ENCODE measurements at regions of chr2 and their contacts with region 1.

Region 1: GRCh38 chr2:136764452-136765255 is 691 bp upstream of the THSD7B start:
- DNase-seq: peak; percentile 77

Region 2: DNA sequence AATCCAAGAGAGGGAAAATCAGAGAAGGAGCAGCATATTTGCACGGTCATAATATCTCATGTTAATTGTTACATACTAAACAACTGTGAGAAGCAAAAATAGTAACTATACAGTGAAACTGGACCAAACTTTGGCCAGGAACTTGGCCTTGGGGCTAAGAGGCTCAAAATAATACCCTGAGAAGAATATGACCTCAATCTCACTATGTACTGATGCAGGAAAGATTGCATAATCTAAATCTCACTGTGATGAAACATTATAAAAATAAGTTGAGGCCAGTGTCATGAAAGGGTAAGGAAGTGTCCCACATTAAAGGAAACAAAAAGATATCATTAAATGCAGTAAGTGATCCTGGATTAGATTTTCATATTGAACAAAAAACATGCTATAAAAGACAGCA is 1270.2 kb before region 1 on chr2:
- intact Hi-C with region 1: loop called in 1 of 2 experiments (anchors 5 kb)
- DNase-seq: no peak

Region 3: DNA sequence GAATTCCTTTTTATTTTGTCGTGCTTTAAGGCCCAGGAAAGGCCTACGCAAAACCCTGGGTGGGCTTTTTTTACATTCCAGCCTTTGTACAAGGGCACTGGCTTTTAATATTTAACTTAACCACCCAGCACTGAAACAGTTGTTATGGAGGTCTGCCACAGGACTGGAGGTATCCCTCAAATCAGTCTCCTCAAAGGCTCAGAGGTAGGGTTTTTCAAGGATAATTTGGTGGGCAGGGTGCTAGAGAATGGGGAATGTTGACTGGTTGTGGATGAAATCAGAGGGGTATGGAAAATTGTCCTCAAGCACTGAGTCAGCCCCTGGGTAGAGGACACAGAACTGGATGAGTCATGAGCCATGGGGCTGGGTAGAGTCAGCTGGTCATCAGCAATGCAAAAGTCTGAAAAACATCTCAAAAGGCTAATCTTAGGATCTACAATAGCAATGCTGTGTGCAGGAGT is 443.8 kb after region 1 on chr2:
- intact Hi-C with region 1: no loop called
- DNase-seq: no peak